ENCODE measurements at regions of chr2 and their contacts with region 1.

Region 1: DNA sequence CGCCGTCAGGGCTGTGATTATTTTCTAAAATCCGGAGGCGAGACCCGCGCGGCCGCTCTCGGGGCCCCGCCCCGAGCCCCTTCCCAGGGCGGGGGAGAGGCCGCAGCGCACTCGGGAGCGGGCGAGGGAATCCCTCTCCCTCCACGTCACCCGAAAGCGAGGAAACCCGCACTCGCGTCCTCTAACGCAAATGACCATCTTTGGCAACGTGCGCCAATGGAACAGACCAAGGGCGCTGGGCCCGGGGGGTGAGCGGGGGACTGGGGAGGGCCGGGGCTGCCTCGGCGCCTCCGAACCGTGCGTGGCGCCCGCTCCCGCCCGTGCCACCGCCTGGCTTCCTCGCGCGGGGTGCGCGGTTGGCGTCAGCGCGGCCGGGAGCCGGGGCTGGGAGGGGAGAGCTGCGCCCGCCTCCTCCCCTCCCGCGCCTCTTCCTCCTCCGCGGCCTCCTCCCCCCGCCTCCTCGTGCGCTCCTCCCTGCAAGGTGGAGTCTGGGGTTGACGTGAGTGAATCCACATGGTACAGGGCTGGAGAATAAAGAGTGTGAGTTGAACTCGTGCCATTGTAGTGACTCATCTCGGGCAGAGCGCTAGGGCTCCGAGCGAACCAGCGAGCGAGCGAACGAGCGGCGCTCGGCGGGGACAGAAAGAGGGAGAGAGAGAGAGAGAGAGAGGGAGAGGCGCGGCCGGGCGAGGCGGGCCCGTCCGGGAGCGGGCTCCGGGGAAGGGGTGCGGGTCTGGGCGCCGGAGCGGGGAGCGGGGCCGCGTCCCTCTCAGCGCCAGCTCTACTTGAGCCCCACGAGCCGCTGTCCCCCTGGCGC is at the start of gene FOSL2:
- DNase-seq: peak; percentile 92 to 95 (median 93)
- ATAC-seq: peak; percentile 89
- H3K4me3 ChIP-seq: peak within 1 kb of the TSS; percentile 65
- H3K27ac ChIP-seq: peak within 1 kb of the TSS; percentile 80; the same call in 2 of the 3 replicates
- H3K4me1 ChIP-seq: peaks cover 9 to 36% of the 10 kb centered on the region in 2 experiments; a peak in 4 of 5 replicates
- H3K27me3 ChIP-seq: peaks cover 0 to 17% of the 10 kb centered on the region in 2 experiments; a peak in 2 of 5 replicates
- CTCF ChIP-seq: 0 out of 6 replicates have a peak, but pooled peaks of 1 of the 3 experiments have one; percentile 2
- EP300 ChIP-seq: peak; percentile 4; the same call in 1 of the 2 replicates
- POLR2A ChIP-seq: peak; percentile 73
- RAD21 ChIP-seq: peak; percentile 4 to 35; a peak in 2 of 4 replicates
- polyA plus RNA-seq, gene FOSL2: 0.04 to 0.07 TPM

Region 2: DNA sequence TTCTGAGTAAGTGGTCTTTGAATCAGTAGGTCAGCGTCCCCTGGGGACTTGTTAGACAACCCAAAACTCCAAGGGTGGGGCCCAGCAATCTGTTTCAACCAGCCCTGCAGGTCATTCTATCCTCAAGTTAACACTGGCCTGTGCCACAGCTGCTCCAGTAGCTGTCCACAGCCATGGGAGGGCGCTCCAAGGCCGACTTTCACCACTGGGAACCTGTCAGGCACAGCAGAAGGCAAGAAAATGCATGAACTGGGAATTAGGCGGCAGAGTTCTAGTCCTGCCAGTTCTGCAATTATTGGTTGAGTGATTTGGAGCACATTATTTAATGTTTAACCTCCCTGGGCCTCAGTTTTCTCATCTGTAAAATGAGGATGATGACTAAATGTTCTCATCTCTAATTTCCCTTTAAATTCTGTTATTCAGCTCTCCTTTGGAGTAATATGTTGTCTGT is 638.3 kb before region 1 on chr2:
- CTCF ChIA-PET with region 1: no interaction called
- POLR2A ChIA-PET with region 1: no interaction called
- in situ Hi-C with region 1: no loop called
- intact Hi-C with region 1: loop called (anchors 1 kb)
- DNase-seq: peak; percentile 72 to 86 (median 73)
- ATAC-seq: peak; percentile 91
- H3K4me3 ChIP-seq: no peak overlapping the region
- H3K27ac ChIP-seq: no peak overlapping the region
- H3K4me1 ChIP-seq: peaks cover 10 to 18% of the 10 kb centered on the region in 2 experiments
- H3K27me3 ChIP-seq: no peaks in the 10 kb centered on the region
- CTCF ChIP-seq: peak; percentile 93 to 96 (median 95)
- EP300 ChIP-seq: no peak; the same call in 1 of the 2 replicates
- POLR2A ChIP-seq: no peak
- RAD21 ChIP-seq: peak; percentile 93 to 95

Region 3: GRCh38 chr2:27890146-27890923 is 502.2 kb before region 1 on chr2 and contains the starts of genes BABAM2 and RBKS:
- CTCF ChIA-PET with region 1: no interaction called
- POLR2A ChIA-PET with region 1: no interaction called
- in situ Hi-C with region 1: no loop called
- intact Hi-C with region 1: loop called (anchors 10 kb)
- DNase-seq: peak; percentile 91 to 97 (median 96)
- ATAC-seq: peak; percentile 93
- H3K4me3 ChIP-seq: peak within 1 kb of the TSS; percentile 57
- H3K27ac ChIP-seq: peak within 1 kb of the TSS; percentile 93
- H3K4me1 ChIP-seq: peaks cover 6 to 10% of the 10 kb centered on the region in 2 experiments; a peak in 4 of 5 replicates
- H3K27me3 ChIP-seq: no peaks in the 10 kb centered on the region
- CTCF ChIP-seq: no peak
- EP300 ChIP-seq: no peak
- POLR2A ChIP-seq: peak; percentile 80
- RAD21 ChIP-seq: peak in 1 of 2 experiments; percentile 6; a peak in 1 of 4 replicates
- polyA plus RNA-seq, gene BABAM2: 35.2 to 37.4 TPM
- polyA plus RNA-seq, gene RBKS: 0.06 to 0.24 TPM

Region 4: GRCh38 chr2:28269019-28269784 is 123.3 kb before region 1 on chr2:
- CTCF ChIA-PET with region 1: no interaction called
- POLR2A ChIA-PET with region 1: no interaction called
- in situ Hi-C with region 1: no loop called
- intact Hi-C with region 1: loop called (anchors 5 kb)
- DNase-seq: peak; percentile 46 to 79 (median 68)
- ATAC-seq: peak; percentile 88
- H3K4me3 ChIP-seq: no peak overlapping the region
- H3K27ac ChIP-seq: peak overlapping the region; percentile 35; the same call in 2 of the 3 replicates
- H3K4me1 ChIP-seq: peaks cover 0 to 11% of the 10 kb centered on the region in 2 experiments; a peak in 3 of 5 replicates
- H3K27me3 ChIP-seq: peaks cover 0 to 3% of the 10 kb centered on the region in 2 experiments; a peak in 1 of 5 replicates
- CTCF ChIP-seq: no peak
- EP300 ChIP-seq: peak; percentile 76
- POLR2A ChIP-seq: no peak
- RAD21 ChIP-seq: no peak

Region 5: DNA sequence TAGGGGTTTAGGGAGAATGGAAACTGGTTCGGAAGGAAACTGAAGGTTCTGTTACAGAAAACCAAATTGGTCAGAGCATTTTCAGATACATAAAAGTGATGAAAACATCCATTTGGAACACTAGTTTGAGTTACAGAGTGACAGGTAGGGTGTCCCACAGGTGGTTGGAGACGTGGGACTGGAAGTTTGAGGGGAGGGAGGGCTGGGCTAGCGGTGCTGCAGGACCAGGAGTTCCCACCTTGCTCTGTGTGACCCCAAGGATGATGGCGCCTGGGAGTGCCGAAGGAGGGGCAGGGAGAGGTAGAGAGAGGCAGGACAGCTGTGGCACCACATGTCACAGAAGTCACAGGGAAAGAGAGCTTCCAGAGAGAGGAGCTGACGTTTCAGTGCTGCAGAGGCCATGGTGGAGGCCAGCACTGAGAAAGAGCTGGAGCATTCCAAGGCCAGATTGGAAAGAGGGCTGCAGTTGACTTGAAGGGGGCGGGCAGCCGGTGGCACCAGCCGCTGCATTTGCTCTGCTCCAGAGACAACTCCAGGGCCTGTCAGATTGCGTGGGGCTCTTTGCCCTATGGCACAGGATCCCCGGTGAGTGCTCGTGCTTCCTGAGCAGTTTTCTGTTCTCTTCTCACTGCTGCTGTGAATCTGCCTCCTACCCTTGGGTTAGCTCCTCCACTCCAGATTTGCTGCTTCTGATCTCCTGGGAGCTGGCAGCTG is 56.1 kb before region 1 on chr2:
- CTCF ChIA-PET with region 1: no interaction called
- POLR2A ChIA-PET with region 1: no interaction called
- in situ Hi-C with region 1: no loop called
- intact Hi-C with region 1: no loop called
- DNase-seq: no peak
- ATAC-seq: no peak
- H3K4me3 ChIP-seq: no peak overlapping the region
- H3K27ac ChIP-seq: no peak overlapping the region
- H3K4me1 ChIP-seq: peaks cover 0 to 8% of the 10 kb centered on the region in 2 experiments; a peak in 2 of 5 replicates
- H3K27me3 ChIP-seq: no peaks in the 10 kb centered on the region; a peak in 1 of 5 replicates
- CTCF ChIP-seq: no peak
- EP300 ChIP-seq: no peak
- POLR2A ChIP-seq: no peak
- RAD21 ChIP-seq: no peak

Region 6: DNA sequence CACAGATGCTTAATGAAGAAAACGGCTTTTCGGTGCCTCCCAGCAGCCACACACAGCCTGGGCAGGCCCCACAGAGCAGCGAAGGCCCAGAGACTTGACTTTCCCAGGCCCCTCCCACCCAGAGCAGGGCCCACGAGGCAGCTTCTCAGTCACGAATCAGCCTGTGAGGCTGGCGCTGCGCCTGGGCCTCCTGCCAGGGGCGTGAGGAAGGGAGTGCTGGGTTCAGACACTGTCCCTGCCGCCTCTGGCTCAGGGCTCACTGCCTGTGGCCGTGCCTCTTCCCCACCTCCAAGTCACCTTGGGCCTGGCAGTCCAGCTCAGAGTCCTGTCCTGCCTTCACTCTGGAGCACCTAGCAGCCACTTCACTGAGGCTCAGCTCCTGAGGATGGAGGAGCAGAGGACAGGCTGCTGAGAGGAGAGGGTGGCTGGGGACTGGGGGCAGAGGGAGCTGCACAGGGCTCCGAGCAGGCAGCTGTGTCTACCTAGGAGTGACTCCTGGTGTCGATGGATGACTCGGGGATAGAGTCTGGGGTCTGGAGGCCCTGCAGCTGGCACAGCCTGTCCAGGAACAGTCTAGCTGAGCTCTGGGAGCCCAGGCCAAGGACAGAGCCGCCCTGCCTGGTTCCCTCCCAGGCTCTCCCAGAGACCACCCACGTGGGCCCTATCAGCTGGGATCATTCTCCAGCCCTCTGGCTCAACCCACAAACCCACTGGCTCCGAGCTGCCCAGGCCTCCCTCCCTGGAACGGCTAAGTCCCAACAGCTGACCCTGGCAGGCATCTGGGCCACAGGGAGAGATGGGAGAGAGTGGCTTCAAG is 36.2 kb before region 1 on chr2:
- CTCF ChIA-PET with region 1: no interaction called
- POLR2A ChIA-PET with region 1: no interaction called
- in situ Hi-C with region 1: no loop called
- intact Hi-C with region 1: loop called (anchors 2 kb)
- DNase-seq: peak; percentile 58 to 67 (median 61)
- ATAC-seq: peak; percentile 40
- H3K4me3 ChIP-seq: no peak overlapping the region
- H3K27ac ChIP-seq: peak overlapping the region; percentile 62; the same call in 2 of the 3 replicates
- H3K4me1 ChIP-seq: peaks cover 57 to 66% of the 10 kb centered on the region in 2 experiments
- H3K27me3 ChIP-seq: no peaks in the 10 kb centered on the region
- CTCF ChIP-seq: no peak
- EP300 ChIP-seq: no peak
- POLR2A ChIP-seq: no peak
- RAD21 ChIP-seq: no peak

Measured in K562 (cell line).